ENCODE measurements at regions of chr12 and their contacts with region 1.

Region 1: GRCh38 chr12:49188914-49189367 is at the start of gene TUBA1A:
- DNase-seq: peak; percentile 97
- H3K4me3 Mint-ChIP-seq: peak within 1 kb of the TSS; percentile 84
- H3K27ac Mint-ChIP-seq: peak within 1 kb of the TSS; percentile 86
- H3K4me1 Mint-ChIP-seq: peaks cover 13% of the 10 kb centered on the region
- H3K27me3 Mint-ChIP-seq: no peaks in the 10 kb centered on the region
- total RNA-seq, gene TUBA1A: 47.4 to 49.1 TPM

Region 2: DNA sequence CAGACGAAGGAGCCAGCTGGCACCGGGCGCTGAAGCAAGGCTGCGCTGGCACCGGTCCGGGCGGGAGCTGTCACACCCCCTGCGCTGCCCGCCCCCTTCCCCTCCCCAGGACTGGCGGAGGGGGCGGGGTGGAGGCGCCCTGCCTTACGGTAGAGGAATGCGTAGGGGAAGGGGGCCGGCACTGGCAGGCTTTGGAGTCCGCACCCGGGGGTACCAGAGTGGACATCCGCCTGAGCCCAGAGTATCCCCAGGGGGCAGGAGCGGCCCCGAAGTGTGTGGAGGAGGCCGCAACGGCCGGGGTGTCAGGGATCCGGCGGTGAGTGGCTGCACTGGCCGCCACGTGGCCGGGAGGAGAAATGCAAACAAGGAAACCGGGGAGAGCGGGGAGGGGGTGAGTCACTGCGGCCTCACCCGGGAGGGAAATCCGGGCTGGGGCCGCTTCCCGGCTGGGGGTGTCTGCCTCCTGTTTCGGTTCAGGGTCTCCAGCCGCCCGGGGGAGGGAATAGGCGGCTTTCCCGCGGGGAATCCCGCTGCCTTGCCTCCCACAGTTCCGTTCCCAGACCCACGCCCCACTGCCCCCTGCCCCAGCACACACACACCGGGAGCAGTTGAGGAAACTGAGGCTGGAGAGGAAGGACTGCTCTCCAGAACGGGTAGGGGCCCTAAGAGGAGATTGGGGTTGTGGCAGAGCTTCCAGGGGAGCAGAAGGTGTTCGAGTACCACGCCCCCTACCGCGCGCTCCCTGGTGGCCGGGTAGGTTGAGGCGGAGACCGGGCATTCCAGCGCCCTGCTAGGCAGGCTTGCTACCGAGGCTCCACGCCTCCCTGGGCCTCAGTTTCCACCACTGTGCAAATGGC is 1429.9 kb before region 1 on chr12 and contains the start of gene RAPGEF3:
- CTCF ChIA-PET with region 1: no interaction called
- intact Hi-C with region 1: loop called (anchors 10 kb)
- DNase-seq: peak; percentile 86
- H3K4me3 Mint-ChIP-seq: peak within 1 kb of the TSS; percentile 65
- H3K27ac Mint-ChIP-seq: no peak within 1 kb of the TSS
- H3K4me1 Mint-ChIP-seq: peaks cover 24% of the 10 kb centered on the region
- H3K27me3 Mint-ChIP-seq: no peaks in the 10 kb centered on the region
- total RNA-seq, gene RAPGEF3: 1.5 to 1.6 TPM

Region 3: DNA sequence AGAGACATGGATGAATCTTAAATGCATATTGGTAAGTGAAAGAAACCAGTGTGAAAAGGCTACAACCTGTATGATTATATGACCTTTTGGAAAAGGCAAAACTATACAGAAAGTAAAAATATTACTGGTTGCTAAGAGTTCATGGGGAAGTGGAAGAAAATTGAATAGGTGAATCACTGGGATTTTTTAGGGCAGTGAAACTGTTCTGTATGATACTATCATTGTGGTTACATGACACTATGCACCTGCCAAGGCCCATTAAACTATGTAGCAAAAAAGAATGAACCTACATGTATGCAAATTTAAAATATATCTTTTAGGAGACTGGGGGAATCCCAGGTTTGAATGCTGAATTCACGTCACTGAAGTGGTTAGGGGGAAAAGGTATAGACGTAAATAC is 676.1 kb before region 1 on chr12:
- CTCF ChIA-PET with region 1: no interaction called
- intact Hi-C with region 1: no loop called
- DNase-seq: peak; percentile 61
- H3K4me3 Mint-ChIP-seq: peak overlapping the region; percentile 6
- H3K27ac Mint-ChIP-seq: peak overlapping the region; percentile 74
- H3K4me1 Mint-ChIP-seq: peaks cover 27% of the 10 kb centered on the region
- H3K27me3 Mint-ChIP-seq: no peaks in the 10 kb centered on the region

Region 4: DNA sequence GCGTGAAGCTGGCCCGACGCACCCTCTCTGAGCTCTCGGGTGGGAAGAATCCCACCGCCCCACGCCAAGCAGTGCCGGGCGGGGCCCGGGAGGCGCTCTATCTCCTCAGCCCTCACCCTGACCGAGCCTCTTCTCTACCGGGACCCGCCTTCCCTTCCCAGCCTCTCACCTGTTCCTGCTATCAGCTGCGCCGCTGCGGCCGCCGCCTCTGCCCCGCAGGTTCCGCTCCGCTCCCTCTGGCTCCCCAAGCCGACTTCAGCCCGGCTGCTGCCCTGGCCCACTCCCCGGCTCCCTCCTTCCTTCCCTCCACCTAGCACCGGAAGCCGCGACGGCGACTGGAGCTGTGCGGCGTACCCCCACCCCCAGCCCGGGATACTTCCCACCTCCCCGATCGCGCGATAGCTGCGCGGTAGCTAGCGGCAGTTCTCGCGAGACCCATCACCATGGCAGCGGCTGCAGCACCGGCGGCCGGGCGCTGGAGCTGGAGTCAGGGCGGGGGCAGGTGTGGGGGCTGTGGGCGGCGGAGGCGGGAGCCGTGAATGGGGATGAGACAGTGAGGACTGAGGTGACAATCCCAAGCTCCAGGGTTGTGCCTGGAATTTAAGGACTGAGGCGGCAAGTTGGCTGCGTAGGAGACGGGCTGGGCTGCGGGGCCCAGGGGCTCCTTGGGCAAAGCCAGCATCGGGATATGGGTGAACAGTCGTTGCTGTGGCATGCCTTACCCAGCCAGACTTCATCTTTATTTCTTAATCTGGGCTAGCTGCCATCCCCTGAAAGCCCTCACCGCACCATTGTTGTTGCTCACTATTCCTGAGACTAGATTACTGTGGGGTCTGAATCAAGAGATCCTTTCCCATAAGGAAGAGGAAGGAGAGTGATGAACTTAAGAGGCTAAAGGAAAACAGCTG is 231.5 kb before region 1 on chr12 and contains the start of gene ARF3:
- CTCF ChIA-PET with region 1: no interaction called
- intact Hi-C with region 1: loop called (anchors 2 kb)
- DNase-seq: peak; percentile 95
- H3K4me3 Mint-ChIP-seq: peak within 1 kb of the TSS; percentile 97
- H3K27ac Mint-ChIP-seq: peak within 1 kb of the TSS; percentile 86
- H3K4me1 Mint-ChIP-seq: peaks cover 29% of the 10 kb centered on the region
- H3K27me3 Mint-ChIP-seq: peaks cover 2% of the 10 kb centered on the region
- total RNA-seq, gene ARF3: 84.4 to 87.3 TPM

Region 5: DNA sequence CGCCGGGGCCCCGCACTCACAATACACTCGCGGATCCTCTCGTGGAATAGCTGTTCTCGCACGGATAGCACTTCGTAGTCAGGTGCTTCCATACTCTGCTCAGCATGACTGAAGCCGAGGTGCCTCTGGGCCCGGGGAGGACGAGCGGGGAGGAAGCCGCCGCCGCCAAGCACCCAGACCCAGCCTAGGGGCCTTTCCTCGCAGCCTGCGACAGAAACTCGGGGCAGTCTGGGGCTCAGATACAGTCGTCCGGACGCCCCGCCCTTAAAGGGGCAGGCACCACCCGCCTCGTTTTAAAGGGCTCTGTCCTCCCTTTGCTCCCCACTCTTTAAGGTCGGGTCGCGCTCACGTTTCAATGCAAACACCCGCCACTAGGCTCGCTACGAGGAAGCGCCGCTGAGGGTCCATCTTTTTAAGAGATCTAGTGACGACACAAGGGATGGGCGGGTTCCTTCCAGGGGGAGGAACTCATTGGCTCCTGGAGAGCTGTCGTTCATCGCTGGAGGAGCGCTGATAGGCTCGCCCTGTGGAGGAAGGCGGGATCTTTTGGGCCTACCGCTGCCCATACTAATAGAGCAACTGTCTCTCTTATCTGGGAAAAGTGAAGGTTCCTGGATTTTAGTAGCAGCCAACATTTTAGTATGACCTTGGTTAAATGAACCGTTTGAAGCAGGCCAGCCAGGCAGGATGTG is 78.3 kb before region 1 on chr12 and contains the start of gene LMBR1L:
- CTCF ChIA-PET with region 1: no interaction called
- intact Hi-C with region 1: loop called (anchors 1 kb)
- DNase-seq: peak; percentile 98
- H3K4me3 Mint-ChIP-seq: peak within 1 kb of the TSS; percentile 93
- H3K27ac Mint-ChIP-seq: peak within 1 kb of the TSS; percentile 94
- H3K4me1 Mint-ChIP-seq: peaks cover 37% of the 10 kb centered on the region
- H3K27me3 Mint-ChIP-seq: no peaks in the 10 kb centered on the region
- total RNA-seq, gene LMBR1L: 60.1 to 66.8 TPM

Region 6: DNA sequence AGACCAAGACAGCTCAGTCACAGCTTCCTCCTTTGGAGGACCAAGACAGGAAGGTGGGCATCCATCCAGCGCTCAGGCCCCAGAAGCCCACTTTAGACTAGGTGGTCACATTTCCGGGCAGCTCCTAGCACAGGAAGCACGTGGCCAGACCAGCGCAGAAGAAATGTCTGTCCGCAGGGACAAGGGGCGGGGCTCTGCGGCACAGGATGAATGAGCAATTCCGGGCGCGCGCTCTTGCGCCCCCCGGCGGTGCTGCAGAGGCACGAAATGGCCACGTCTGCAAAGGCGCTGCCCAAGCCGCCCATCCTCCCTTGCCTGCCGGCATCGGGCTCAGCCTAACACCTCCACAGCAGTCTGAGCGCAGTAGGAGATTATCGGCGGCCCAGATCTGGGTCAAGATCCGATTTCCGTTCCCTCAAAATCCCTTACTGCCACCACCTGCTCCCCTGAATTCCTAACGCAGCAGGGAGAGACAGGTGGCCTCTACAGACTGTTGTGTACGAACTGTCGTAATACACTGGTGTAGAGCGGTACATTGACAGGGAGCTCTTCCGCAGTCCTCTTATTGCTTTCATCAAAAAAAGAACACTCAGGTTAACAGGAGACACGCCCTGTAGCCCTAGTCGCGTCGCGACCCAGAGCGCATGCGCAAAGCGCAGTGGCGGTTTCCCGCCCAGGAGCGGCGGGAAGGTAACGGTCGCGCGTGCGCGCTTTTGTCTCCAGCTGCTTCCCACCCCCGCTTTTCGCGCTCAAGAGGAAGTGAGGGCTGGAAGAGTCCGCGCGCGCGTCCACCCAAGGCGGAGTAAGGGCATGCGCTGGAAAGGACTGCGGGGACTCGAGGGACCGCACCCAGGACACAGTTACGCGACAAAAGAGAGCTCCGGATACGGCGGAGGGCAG is 58.5 kb before region 1 on chr12:
- CTCF ChIA-PET with region 1: interaction called, 14 read pairs
- intact Hi-C with region 1: loop called (anchors 1 kb)
- DNase-seq: peak; percentile 96
- H3K4me3 Mint-ChIP-seq: peak overlapping the region; percentile 97
- H3K27ac Mint-ChIP-seq: peak overlapping the region; percentile 100
- H3K4me1 Mint-ChIP-seq: peaks cover 43% of the 10 kb centered on the region
- H3K27me3 Mint-ChIP-seq: no peaks in the 10 kb centered on the region

Region 7: DNA sequence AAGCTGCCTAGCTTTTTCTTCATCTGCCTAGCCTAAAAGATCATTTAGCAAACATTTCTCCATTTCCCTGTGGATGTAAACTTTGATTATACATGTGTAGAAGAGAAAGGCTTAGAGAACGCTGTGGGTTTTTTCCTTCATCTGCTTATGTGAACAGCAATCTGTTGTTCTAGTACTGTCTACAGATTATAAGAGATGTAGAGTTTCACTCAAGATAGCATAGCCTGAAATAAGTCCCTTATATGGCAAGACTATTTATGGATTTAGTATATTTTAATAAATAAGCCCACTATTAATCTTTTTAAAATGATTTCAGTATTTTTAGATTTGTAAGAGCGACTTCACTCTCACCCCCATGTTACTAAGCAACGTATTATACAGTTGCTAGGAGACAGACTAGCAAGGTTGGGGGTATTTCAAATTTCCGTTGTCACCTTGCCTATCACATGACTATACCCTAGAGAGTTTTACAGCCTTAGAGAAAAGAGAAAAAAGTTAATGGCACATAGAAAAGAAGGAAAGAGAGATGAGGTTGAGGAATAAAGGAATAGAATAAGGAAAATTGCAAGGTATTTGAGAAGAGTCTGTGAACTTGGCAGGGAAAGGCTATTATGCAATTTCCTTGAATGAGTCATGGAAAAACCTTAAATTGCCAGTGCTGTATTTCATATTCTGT is 12.1 kb after region 1 on chr12:
- CTCF ChIA-PET with region 1: interaction called, 5 read pairs
- intact Hi-C with region 1: loop called (anchors 1 kb)
- DNase-seq: no peak
- H3K4me3 Mint-ChIP-seq: peak overlapping the region; percentile 20
- H3K27ac Mint-ChIP-seq: no peak overlapping the region
- H3K4me1 Mint-ChIP-seq: peaks cover 11% of the 10 kb centered on the region
- H3K27me3 Mint-ChIP-seq: no peaks in the 10 kb centered on the region

Region 8: DNA sequence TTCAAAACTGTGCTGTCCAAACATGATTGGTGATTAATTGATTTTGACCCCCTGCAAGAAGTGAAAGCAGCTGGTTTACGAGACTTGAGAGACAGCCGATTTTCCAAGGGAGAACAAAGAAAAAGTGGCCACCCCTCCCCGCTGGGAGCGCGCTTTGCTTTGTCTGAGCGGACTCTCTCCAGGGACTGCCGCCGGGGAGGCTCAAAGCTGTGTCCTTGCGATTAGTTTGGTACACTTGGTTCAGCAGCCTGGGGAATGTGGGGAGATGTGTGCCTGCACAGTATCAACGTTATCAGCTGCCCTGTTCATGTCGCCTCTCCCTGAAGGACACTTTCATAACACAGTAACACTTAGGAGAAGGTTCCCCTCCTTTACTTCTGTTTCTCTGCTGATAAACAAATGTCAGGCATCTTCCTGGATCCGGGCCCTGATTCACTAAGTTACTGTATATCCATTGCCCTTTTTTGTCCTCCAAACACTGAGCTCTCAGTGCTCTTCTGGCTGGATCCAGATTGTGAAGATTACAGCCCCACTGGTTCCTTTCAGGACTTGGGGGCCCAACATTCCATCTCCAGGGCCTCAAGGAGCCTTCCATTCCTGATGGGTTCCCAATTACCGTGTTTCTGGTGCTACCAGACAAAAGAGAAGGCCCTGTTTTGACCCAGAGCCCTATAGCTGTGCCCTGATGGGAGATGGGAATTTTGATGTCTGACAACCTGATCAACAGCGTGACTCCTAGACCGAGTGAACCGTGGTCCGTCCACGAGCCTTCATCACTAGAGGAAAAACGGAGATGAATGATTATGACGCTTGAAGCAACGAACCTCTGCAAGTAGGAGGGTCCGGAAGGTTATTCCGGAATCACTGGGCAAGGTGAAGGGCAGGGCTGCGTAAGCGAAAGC is 44.2 kb after region 1 on chr12:
- CTCF ChIA-PET with region 1: interaction called, 3 read pairs
- intact Hi-C with region 1: loop called (anchors 1 kb)
- DNase-seq: no peak
- H3K4me3 Mint-ChIP-seq: peak overlapping the region; percentile 85
- H3K27ac Mint-ChIP-seq: peak overlapping the region; percentile 81
- H3K4me1 Mint-ChIP-seq: peaks cover 12% of the 10 kb centered on the region
- H3K27me3 Mint-ChIP-seq: no peaks in the 10 kb centered on the region

Measured in activated naive CD4-positive, alpha-beta T cell treated with anti-CD3 and anti-CD28 coated beads for 36 hours (primary cell).